MCF 10A (cell line): ENCODE measurements at regions of chr5 and their contacts with region 1.

Region 1: DNA sequence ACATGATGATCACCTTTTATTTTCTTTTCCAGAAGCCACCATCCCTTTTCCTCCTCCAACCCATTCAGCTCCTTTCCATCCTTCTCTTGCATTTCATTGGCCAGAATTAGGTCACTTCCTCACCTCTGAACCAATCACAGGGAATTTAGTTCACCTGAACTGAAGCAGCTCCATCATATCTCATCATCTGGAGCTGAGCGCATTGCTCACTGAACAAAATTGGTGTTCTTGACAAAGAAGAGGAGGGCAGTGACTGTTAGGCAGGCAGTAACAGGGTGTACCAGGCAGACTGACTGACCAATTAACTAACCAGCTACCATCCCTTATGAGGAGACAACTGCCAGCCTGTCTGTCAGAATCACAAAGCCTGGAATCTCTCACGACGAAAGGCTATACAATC is 1.8 kb upstream of the ZNF354A start:
- DNase-seq: no peak
- H3K4me3 Mint-ChIP-seq: no peak overlapping the region
- H3K27ac Mint-ChIP-seq: no peak overlapping the region
- H3K4me1 Mint-ChIP-seq: peaks cover 8% of the 10 kb centered on the region
- H3K27me3 Mint-ChIP-seq: no peaks in the 10 kb centered on the region
- CTCF ChIP-seq: no peak

Region 2: DNA sequence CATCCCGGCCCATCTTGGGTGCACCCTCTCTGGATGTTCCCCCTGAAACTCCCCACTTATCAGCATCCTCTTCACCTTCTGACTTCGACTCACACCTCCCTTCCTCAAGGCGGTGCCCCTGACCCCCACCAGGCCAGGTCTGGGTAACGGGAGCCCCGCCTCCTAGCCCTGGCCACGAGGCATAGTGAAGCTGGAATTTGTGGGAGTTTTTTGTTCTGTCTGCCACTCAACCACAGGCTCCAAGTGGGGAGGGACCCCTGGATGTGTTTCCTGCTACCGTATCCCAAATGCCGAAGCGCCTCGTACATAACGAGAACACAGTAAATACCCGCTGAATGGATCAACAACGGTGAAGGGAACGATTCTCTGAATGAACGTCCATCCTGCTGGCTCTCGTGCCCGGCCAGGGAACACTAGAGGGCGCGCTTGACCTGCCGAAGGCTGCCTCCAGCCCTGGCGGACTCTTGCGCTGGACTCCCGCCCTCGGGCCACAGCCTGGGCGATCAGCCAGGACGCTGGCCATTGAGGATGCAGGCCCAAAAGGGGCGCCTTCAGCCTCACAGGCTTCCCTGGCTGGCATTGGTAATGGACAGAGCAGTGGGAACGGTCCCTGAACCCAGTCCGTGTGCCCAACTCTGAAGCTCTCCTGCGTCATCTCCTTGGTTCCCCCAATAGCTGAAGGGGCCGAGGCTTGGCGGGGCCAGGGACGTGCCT is 452.4 kb before region 1 on chr5:
- CTCF ChIA-PET with region 1: interaction called, 6 read pairs
- POLR2A ChIA-PET with region 1: interaction called, 5 read pairs
- intact Hi-C with region 1: loop called (anchors 1 kb)
- DNase-seq: peak; percentile 87
- H3K4me3 Mint-ChIP-seq: no peak overlapping the region
- H3K27ac Mint-ChIP-seq: no peak overlapping the region
- H3K4me1 Mint-ChIP-seq: peaks cover 30% of the 10 kb centered on the region
- H3K27me3 Mint-ChIP-seq: no peaks in the 10 kb centered on the region
- CTCF ChIP-seq: peak; percentile 99

Region 3: DNA sequence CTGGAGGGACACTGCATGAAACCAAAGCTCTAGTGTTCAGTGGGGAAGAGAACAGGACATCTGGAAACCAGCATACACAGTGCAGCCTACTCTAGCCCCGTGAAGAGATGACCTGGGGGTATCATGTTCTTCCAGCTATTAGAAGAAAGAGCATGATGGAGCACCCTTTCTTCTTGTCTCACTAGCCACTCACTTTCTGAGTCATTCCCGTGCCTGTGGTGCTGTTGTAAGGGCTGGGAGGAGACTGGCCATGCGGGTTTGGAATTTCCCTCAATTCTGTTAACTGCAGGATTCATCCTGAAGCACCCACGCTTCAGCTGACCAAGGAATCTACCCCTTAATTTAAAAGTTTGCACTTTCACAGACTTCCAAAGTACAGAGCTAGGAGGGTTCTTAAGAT is 279.1 kb before region 1 on chr5:
- CTCF ChIA-PET with region 1: no interaction called
- POLR2A ChIA-PET with region 1: no interaction called
- intact Hi-C with region 1: no loop called
- DNase-seq: peak; percentile 64
- H3K4me3 Mint-ChIP-seq: no peak overlapping the region
- H3K27ac Mint-ChIP-seq: no peak overlapping the region
- H3K4me1 Mint-ChIP-seq: peaks cover 12% of the 10 kb centered on the region
- H3K27me3 Mint-ChIP-seq: no peaks in the 10 kb centered on the region
- CTCF ChIP-seq: no peak

Region 4: DNA sequence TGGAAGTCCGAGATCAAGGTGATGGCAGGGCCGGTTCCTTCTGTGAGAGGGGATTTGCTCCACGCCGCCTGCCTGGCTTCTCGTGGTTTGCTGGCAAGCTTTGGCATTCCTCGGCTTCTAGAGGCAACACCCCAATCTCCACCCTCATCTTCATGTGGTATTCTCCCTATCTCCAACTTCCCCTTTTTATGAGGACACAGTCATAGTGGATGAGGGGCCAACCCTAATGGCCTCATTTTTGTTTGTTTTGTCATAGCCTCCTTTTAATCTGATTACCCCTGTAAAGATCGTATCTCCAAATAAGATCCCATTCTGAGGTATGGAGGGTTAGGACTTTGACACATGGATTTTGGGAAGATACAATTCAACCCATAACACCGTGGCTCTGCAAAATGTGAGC is 63.7 kb before region 1 on chr5:
- CTCF ChIA-PET with region 1: no interaction called
- POLR2A ChIA-PET with region 1: no interaction called
- intact Hi-C with region 1: no loop called
- DNase-seq: no peak
- H3K4me3 Mint-ChIP-seq: no peak overlapping the region
- H3K27ac Mint-ChIP-seq: no peak overlapping the region
- H3K4me1 Mint-ChIP-seq: peaks cover 2% of the 10 kb centered on the region
- H3K27me3 Mint-ChIP-seq: no peaks in the 10 kb centered on the region
- CTCF ChIP-seq: no peak

Region 5: DNA sequence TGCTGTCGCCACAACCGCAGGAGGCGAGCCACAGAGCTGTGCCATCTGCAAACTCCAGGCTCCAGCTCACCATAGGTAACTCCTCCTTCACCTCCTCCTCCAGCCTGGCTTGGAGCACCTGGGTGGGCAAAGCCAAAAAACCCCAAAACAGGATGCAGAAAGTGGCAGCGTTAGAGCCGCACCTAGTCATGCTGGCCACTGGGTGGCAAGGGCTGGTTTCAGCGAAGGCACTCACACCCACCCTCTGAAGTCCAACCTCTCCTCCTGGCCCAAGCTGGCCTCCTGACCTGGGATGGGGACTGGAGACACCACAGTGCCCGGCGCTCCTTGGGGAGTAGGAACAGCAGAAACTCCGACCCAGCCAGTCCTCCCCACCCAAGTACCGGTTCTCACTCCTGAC is 98.8 kb after region 1 on chr5:
- CTCF ChIA-PET with region 1: interaction called, 51 read pairs
- POLR2A ChIA-PET with region 1: interaction called, 11 read pairs
- intact Hi-C with region 1: no loop called
- DNase-seq: no peak
- H3K4me3 Mint-ChIP-seq: no peak overlapping the region
- H3K27ac Mint-ChIP-seq: no peak overlapping the region
- H3K4me1 Mint-ChIP-seq: peaks cover 17% of the 10 kb centered on the region
- H3K27me3 Mint-ChIP-seq: no peaks in the 10 kb centered on the region
- CTCF ChIP-seq: no peak

Region 6: DNA sequence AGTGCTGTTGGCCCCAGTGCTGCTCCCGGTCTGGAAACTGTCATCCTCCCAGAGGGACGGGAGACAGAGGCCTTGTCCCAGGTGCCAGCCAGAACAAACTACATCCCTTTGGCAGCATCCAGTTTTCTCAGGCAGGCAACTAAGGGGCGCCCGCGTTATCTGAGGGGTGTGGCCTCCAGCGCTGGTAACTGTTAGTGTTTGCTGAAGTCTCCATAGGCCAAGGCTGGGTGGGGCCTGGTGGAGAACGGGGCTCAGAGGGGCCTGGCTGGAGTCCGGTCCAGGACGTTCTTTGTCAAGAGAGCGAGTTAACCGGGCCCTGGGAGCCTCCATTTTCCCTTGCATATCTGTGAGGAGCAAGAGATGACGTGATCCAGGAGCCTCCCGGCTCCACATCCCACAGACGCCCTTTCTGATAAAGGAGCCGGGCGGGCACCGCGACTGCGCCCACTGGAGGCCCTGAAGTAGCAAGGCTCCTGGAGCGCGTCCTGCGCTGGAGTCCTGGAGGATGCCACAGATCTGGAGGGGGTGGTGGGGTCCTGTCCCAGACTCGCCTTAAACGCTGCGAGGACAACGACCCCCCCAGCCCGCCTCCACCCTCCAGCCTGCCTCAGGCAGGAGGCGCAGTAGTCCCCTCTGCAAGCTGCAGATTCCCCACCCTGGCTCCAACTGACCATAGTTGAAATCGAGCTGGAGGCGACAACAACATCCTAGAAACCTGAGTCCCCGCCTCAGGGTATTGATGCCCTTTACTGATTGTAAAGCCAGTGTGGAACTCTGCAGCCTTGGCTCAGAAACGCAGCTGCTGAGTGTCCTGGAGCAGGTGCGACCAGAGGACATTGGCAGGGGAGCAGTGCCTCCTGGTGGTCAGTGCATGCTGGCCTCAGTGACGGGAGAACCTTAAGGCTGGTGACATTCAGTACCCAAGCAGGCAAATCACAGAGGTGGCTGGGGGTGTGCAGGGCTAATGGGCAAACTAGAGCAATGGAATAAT is 106.7 kb after region 1 on chr5:
- CTCF ChIA-PET with region 1: interaction called, 51 read pairs
- POLR2A ChIA-PET with region 1: interaction called, 5 read pairs
- intact Hi-C with region 1: loop called (anchors 1 kb)
- DNase-seq: peak; percentile 75
- H3K4me3 Mint-ChIP-seq: no peak overlapping the region
- H3K27ac Mint-ChIP-seq: no peak overlapping the region
- H3K4me1 Mint-ChIP-seq: peaks cover 5% of the 10 kb centered on the region
- H3K27me3 Mint-ChIP-seq: no peaks in the 10 kb centered on the region
- CTCF ChIP-seq: peak; percentile 93

Region 7: GRCh38 chr5:178859625-178860531 is 127.6 kb after region 1 on chr5 and contains the start of gene ZNF354B:
- CTCF ChIA-PET with region 1: interaction called, 7 read pairs
- POLR2A ChIA-PET with region 1: interaction called, 16 read pairs
- intact Hi-C with region 1: loop called (anchors 1 kb)
- DNase-seq: peak; percentile 98
- H3K4me3 Mint-ChIP-seq: peak within 1 kb of the TSS; percentile 77
- H3K27ac Mint-ChIP-seq: peak within 1 kb of the TSS; percentile 61
- H3K4me1 Mint-ChIP-seq: peaks cover 26% of the 10 kb centered on the region
- H3K27me3 Mint-ChIP-seq: no peaks in the 10 kb centered on the region
- CTCF ChIP-seq: peak; percentile 15
- total RNA-seq, gene ZNF354B: 24.4 and 24.8 TPM in 2 replicates

Region 8: GRCh38 chr5:179404321-179405053 is 672.2 kb after region 1 on chr5:
- CTCF ChIA-PET with region 1: no interaction called
- POLR2A ChIA-PET with region 1: no interaction called
- intact Hi-C with region 1: loop called (anchors 1 kb)
- DNase-seq: peak; percentile 10
- H3K4me3 Mint-ChIP-seq: no peak overlapping the region
- H3K27ac Mint-ChIP-seq: no peak overlapping the region
- H3K4me1 Mint-ChIP-seq: no peaks in the 10 kb centered on the region
- H3K27me3 Mint-ChIP-seq: no peaks in the 10 kb centered on the region
- CTCF ChIP-seq: peak; percentile 61

Region 9: DNA sequence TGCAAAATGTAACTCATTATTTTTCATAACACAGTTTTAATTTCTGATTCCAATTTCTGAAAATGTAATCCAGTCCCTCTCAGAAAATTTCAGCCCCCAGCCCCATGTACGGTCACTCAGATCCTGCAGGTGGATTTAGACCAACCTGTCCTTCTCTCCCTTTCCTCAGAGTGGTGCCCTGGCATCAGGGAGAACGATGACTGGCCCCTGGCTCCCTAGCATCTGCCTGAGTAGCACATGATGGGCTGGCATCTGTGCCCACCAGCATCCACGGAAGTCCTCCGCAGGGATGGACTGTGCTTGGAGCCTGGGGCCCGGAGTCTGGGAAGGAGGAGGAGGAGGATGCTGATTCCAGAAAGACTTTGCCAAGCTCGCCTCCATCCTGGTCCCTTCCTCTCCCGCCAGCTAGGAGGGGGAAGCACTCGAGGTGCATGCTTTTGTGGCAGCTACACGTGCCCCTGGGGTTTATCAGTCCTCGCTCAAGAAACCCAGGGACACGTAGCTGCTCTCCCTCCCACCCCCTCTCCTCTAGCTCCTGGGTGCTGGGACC is 763.7 kb after region 1 on chr5:
- CTCF ChIA-PET with region 1: interaction called, 8 read pairs
- POLR2A ChIA-PET with region 1: interaction called, 4 read pairs
- intact Hi-C with region 1: loop called (anchors 1 kb)
- DNase-seq: peak; percentile 39
- H3K4me3 Mint-ChIP-seq: no peak overlapping the region
- H3K27ac Mint-ChIP-seq: no peak overlapping the region
- H3K4me1 Mint-ChIP-seq: no peaks in the 10 kb centered on the region
- H3K27me3 Mint-ChIP-seq: no peaks in the 10 kb centered on the region
- CTCF ChIP-seq: peak; percentile 21